ENCODE measurements at regions of chr9 and their contacts with region 1.

Region 1: DNA sequence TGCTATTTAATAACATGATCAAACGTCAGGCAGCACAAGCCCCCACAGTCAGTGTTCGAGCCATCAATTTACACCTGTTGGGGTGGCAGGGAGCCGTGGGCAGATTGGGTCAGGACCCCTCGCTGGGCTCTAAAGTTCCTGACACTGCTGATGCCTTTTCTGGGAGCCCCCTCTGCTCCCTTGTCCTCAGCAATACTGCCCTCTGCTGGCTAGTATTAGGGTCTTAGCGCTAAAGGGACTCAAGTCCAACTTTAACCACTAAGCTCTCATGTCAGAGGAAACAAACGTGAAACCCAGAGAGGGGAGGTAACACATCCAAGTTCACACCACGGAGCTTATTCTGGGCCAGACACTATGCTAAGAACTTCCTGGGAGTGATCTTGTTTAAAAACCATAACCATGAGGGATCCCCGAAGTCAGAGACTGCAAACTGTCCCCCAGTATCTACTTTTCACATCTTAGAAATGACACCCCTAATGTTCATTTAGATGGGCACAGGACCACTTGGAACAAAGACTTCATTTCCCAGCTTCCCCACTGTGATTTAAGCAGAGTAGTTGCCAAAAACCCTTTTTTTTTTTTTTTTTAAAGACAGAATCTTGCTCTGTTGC is 20.4 kb downstream of the ANKS6 start:
- DNase-seq: peak; percentile 88
- H3K4me3 ChIP-seq: no peak overlapping the region; a peak in 1 of 4 replicates
- H3K27ac ChIP-seq: no peak overlapping the region
- H3K4me1 ChIP-seq: no peaks in the 10 kb centered on the region
- H3K27me3 ChIP-seq: no peaks in the 10 kb centered on the region
- CTCF ChIP-seq: peak; percentile 89
- EP300 ChIP-seq: no peak
- RAD21 ChIP-seq: peak; percentile 81

Region 2: DNA sequence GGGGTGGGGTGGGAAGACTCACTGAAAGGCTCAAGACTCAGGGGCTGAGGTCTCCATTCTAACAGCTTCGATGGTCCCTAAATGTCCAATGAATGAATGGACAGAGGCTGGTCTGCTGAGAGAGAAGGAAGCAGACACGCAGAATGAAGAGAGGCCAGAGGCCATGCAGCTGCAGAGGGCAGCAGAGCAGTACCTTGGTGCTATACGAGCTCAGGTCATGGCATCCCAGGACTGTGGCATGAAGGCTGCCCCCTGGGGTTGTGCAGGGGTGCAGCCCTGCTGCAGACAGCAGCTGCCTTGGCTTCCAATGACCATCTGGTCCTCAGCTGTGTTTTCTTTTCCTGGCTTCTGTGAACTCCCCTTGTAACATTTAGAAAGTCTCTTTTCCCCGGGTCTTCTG is 568.3 kb before region 1 on chr9:
- CTCF ChIA-PET with region 1: interaction called, 10 read pairs
- POLR2A ChIA-PET with region 1: no interaction called
- DNase-seq: no peak
- H3K4me3 ChIP-seq: no peak overlapping the region
- H3K27ac ChIP-seq: no peak overlapping the region
- H3K4me1 ChIP-seq: no peaks in the 10 kb centered on the region
- H3K27me3 ChIP-seq: no peaks in the 10 kb centered on the region
- CTCF ChIP-seq: no peak
- EP300 ChIP-seq: no peak
- RAD21 ChIP-seq: no peak

Region 3: GRCh38 chr9:98315551-98316060 is 460.3 kb before region 1 on chr9:
- CTCF ChIA-PET with region 1: interaction called, 198 read pairs
- POLR2A ChIA-PET with region 1: no interaction called
- DNase-seq: peak; percentile 89
- H3K4me3 ChIP-seq: peak overlapping the region in 1 of 2 experiments; percentile 36; a peak in 1 of 4 replicates
- H3K27ac ChIP-seq: no peak overlapping the region
- H3K4me1 ChIP-seq: peaks cover 5 to 7% of the 10 kb centered on the region in 2 experiments; a peak in 2 of 4 replicates
- H3K27me3 ChIP-seq: no peaks in the 10 kb centered on the region; the same call in 1 of the 2 replicates
- CTCF ChIP-seq: peak; percentile 97
- EP300 ChIP-seq: no peak
- RAD21 ChIP-seq: peak; percentile 94

Region 4: DNA sequence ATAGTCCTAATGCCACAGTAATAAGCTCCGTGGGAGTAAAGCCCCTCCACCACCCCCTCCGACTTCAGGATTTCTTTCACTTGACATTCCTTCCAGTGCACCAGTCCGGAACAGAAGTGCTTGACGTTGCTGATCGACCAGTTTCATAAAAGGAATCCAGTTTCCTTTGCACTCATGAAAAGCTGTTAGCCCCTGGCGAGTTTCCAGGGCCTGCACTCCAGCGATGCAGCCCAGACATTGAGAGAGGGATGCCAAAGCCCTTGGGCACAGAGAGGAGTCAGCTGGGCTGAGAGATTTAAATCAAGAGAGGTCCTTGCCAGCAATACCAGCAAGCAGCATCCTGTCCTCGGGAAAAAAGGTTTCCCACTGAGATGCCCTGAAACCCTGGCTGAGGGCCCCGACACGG is 237.3 kb before region 1 on chr9:
- CTCF ChIA-PET with region 1: no interaction called
- POLR2A ChIA-PET with region 1: no interaction called
- DNase-seq: peak; percentile 59
- H3K4me3 ChIP-seq: no peak overlapping the region
- H3K27ac ChIP-seq: no peak overlapping the region
- H3K4me1 ChIP-seq: peaks cover 0 to 6% of the 10 kb centered on the region in 2 experiments; a peak in 1 of 4 replicates
- H3K27me3 ChIP-seq: no peaks in the 10 kb centered on the region
- CTCF ChIP-seq: no peak
- EP300 ChIP-seq: peak in 1 of 2 experiments; percentile 11; a peak in 1 of 4 replicates
- RAD21 ChIP-seq: no peak

Region 5: GRCh38 chr9:98755006-98755575 is 20.8 kb before region 1 on chr9:
- CTCF ChIA-PET with region 1: interaction called, 34 read pairs
- POLR2A ChIA-PET with region 1: no interaction called
- DNase-seq: no peak
- H3K4me3 ChIP-seq: no peak overlapping the region
- H3K27ac ChIP-seq: no peak overlapping the region
- H3K4me1 ChIP-seq: no peaks in the 10 kb centered on the region
- H3K27me3 ChIP-seq: no peaks in the 10 kb centered on the region
- CTCF ChIP-seq: no peak
- EP300 ChIP-seq: no peak
- RAD21 ChIP-seq: no peak

Region 6: GRCh38 chr9:98791147-98792095 is 15.5 kb after region 1 on chr9:
- CTCF ChIA-PET with region 1: interaction called, 79 read pairs
- POLR2A ChIA-PET with region 1: no interaction called
- DNase-seq: peak; percentile 86
- H3K4me3 ChIP-seq: no peak overlapping the region; a peak in 1 of 4 replicates
- H3K27ac ChIP-seq: peak overlapping the region in 1 of 2 experiments; percentile 29; a peak in 2 of 4 replicates
- H3K4me1 ChIP-seq: peaks cover 3 to 15% of the 10 kb centered on the region in 2 experiments; a peak in 1 of 4 replicates
- H3K27me3 ChIP-seq: no peaks in the 10 kb centered on the region
- CTCF ChIP-seq: peak; percentile 99
- EP300 ChIP-seq: no peak
- RAD21 ChIP-seq: peak; percentile 67

Measured in SK-N-SH (cell line).